Heart right ventricle (tissue), 16 donors: ENCODE measurements at regions of chr17 and their contacts with region 1.

Region 1: DNA sequence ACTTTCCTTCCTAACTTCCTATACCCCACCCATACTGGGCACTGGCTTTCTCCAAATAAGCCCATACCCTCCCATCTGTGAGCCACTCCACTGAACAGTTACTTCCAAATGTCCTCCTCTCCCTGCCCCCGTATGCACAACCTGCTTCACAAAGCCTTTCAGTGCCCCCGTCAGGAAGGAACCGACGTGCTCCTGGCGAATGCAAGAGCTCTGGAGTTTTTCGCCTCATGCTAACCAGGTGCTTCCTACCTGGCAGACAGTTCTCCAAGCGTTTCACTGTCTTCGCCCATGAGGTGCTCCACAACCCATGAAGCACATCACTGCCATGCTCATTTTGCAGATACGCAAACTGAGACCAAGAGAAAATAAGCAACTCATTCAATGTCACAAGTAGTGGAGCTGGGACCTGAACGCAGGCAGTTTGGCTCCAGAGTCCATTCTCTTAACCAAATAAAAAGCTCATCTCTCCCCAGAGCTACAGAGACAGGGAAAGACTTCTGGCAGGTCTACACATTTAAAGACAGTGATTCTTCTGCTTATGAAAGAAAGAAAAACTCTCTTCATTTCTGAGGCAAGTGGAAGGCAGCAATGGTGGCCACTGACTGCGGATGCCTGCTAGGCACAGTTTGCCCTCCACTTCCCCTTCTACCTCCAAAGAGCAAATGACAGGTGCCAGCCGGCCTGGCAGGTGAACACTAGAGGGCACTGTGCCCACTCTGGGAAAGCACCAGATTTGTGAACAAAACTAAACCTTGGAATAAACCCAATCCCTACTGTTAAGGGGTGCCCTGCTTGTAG is 23.8 kb downstream of the SPHK1 start:
- DNase-seq: peak; percentile 55
- ATAC-seq: peak in 1 of 8 donors; percentile 25
- H3K4me3 ChIP-seq: no peak overlapping the region
- H3K27ac ChIP-seq: peak overlapping the region in 1 of 10 donors; percentile 21
- H3K4me1 ChIP-seq: peaks cover 24 to 88% (median 43%) of the 10 kb centered on the region in 9 donors
- H3K27me3 ChIP-seq: no peaks in the 10 kb centered on the region
- CTCF ChIP-seq: peak; percentile 55 to 85 (median 75)

Region 2: GRCh38 chr17:76103274-76104139 is 304.7 kb before region 1 on chr17 and contains the start of gene EXOC7:
- intact Hi-C with region 1: loop called in 1 of 10 experiments (anchors 10 kb)
- DNase-seq: peak; percentile 92 to 93
- ATAC-seq: peak; percentile 95 to 99 (median 99)
- H3K4me3 ChIP-seq: peak within 1 kb of the TSS; percentile 52 to 93 (median 83)
- H3K27ac ChIP-seq: peak within 1 kb of the TSS; percentile 53 to 93 (median 86)
- H3K4me1 ChIP-seq: peaks cover 8 to 31% (median 21%) of the 10 kb centered on the region in 9 donors
- H3K27me3 ChIP-seq: no peaks in the 10 kb centered on the region
- CTCF ChIP-seq: peak in 2 of 9 donors; percentile 12 to 22
- total RNA-seq, gene EXOC7: 66.4 to 97.5 (median 87.9) TPM

Region 3: DNA sequence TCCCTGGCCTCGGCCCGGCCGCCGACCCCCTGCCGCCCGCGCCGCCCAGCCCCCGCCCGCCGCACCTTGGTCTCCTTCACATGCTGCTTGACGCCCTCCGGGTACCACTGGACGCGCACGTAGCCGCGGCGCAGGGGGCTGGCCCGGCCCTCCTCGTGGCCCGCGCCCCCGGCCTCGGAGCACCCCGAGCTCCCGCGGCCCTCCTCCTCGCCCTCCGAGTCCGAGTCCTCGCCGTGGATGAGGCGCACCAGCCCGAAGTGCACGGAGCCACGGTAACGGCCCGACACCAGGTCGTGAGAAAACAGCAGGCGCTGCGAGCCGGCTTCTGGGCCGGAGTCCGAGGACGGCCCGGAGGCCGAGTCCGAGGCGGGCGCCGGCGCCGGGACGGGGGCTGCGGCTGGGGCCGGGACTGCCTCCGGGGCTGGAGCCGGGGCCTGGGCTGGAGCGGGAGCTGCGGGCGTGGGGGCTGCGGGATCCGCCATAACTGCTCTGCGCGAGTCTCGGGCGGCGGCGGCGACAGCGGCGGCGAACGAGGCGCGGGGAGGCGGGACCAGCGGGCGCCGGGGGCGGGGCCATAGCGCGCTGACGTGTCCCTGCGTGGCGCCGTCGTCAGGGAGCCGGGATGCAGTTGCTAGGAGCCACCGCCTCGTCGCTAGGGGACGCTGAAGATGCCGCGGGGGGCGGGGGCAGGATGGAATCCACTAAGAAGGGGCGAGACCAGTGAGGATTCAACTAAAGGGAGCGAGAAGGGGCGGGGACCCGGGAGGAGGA is 44.6 kb after region 1 on chr17 and contains the start of gene UBE2O:
- intact Hi-C with region 1: loop called (anchors 1 to 5 kb)
- DNase-seq: peak; percentile 87 to 91
- ATAC-seq: peak; percentile 91 to 97 (median 92)
- H3K4me3 ChIP-seq: peak within 1 kb of the TSS; percentile 70 to 99 (median 93)
- H3K27ac ChIP-seq: peak within 1 kb of the TSS; percentile 60 to 95 (median 88)
- H3K4me1 ChIP-seq: peaks cover 4 to 45% (median 30%) of the 10 kb centered on the region in 9 donors
- H3K27me3 ChIP-seq: no peaks in the 10 kb centered on the region
- CTCF ChIP-seq: peak in 8 of 9 donors; percentile 6 to 64 (median 50)
- total RNA-seq, gene UBE2O: 31.0 to 39.0 (median 36.9) TPM

Region 4: GRCh38 chr17:76458580-76459490 is 50.6 kb after region 1 on chr17:
- intact Hi-C with region 1: loop called (anchors 1 to 5 kb)
- DNase-seq: peak; percentile 48 to 57
- ATAC-seq: peak; percentile 43 to 86 (median 79)
- H3K4me3 ChIP-seq: no peak overlapping the region
- H3K27ac ChIP-seq: no peak overlapping the region
- H3K4me1 ChIP-seq: no peaks in the 10 kb centered on the region
- H3K27me3 ChIP-seq: no peaks in the 10 kb centered on the region
- CTCF ChIP-seq: peak in 8 of 9 donors; percentile 13 to 62 (median 53)

Region 5: DNA sequence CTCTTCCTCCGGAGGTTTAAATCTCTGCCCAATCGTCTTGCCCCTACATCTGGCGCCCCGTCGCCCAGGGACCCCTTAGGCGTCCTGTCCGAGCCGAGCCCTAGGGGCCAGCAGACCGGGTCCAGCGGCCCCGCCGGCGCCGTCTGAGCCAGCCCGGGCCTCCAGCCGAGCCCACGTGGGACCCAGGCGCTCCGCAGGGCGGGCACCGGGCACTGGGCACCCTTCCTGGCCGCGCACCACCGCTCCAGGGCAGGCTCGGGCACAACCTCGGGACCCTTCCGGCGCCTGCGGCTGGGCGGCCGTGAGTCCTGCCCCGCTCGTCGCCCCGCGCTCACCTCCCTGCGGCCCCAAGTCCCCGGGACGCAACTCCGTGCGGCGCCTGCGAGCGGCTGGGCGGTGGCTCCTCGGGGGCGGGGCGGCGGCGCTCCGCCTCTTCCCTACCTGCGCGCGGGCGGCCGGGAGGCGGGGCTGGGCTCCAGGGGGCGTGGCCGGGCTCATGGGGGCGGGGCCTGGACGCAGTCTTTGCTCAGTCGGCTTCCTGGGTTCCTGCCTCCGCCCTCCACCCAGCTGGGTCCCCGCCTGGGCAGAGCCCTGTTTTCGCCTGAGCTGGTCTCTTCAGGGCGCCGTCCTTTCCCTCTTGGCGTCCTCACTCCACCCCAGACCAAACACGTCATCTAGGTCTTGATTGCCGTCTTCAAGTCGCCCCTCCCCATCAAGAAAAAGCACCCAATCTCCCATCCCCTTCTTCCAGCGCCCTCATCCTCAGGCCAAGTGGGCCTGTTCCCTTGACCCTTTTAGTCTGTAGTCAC is 93.0 kb after region 1 on chr17 and contains the start of gene RHBDF2:
- intact Hi-C with region 1: loop called in 7 of 10 experiments (anchors 5 to 10 kb)
- DNase-seq: peak; percentile 85 to 94
- ATAC-seq: peak; percentile 80 to 91 (median 88)
- H3K4me3 ChIP-seq: peak within 1 kb of the TSS; percentile 35 to 85 (median 78)
- H3K27ac ChIP-seq: peak within 1 kb of the TSS; percentile 83 to 97 (median 92)
- H3K4me1 ChIP-seq: peaks cover 20 to 64% (median 48%) of the 10 kb centered on the region in 9 donors
- H3K27me3 ChIP-seq: no peaks in the 10 kb centered on the region
- CTCF ChIP-seq: no peak
- total RNA-seq, gene RHBDF2: 6.5 to 33.1 (median 7.7) TPM

Region 6: GRCh38 chr17:76506408-76507349 is 98.4 kb after region 1 on chr17:
- intact Hi-C with region 1: loop called in 7 of 10 experiments (anchors 5 to 10 kb)
- DNase-seq: peak; percentile 83 to 87
- ATAC-seq: peak; percentile 73 to 91 (median 79)
- H3K4me3 ChIP-seq: no peak overlapping the region
- H3K27ac ChIP-seq: no peak overlapping the region
- H3K4me1 ChIP-seq: peaks cover 2 to 40% (median 7%) of the 10 kb centered on the region in 9 donors
- H3K27me3 ChIP-seq: peaks cover 0 to 9% (median 0%) of the 10 kb centered on the region in 7 donors
- CTCF ChIP-seq: peak; percentile 81 to 98 (median 94)